Gastrocnemius medialis (tissue), 4 donors: ENCODE measurements at regions of chr20 and their contacts with region 1.

Region 1: DNA sequence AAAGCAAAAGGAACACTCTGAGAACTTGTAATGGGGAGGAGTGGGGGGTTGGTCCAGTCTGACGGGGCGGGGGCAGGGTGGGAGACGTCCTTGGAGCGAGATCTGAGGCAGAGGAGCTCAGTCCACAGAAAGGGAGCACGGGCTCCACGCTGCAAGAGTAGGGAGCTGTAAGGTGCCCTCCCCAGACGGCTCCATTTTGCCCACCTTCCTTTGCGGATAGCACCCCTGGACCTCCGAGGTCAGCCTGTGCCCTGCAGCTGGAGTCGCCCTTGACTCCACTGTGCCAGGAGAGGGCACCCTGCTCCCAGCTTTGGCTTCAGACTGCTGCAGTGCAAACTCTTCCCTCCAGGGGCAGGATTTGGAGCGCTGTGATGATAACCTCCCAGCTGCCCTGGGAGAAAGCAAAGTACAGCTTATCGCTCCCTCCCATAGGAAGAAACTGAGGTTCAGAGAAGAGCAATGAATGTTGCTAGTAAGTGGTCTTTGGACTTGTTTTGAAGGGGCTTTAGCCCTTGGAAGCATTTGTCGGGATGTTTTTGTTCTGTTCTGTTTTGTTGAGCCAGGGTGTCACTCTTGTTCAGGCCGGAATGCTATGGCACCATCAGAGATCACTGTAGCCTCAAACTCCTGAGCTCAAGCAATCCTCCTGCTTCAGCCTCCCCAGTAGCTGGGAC is 9.5 kb upstream of the AHCY start:
- DNase-seq: peak; percentile 71 to 78
- ATAC-seq: peak; percentile 98 to 99
- H3K4me3 ChIP-seq: peak overlapping the region in 2 of 4 donors; percentile 15 to 22
- H3K27ac ChIP-seq: no peak overlapping the region
- H3K4me1 ChIP-seq: peaks cover 0 to 3% of the 10 kb centered on the region in 2 donors
- H3K27me3 ChIP-seq: peaks cover 4 to 10% (median 7%) of the 10 kb centered on the region in 3 donors
- CTCF ChIP-seq: peak; percentile 91 to 99 (median 98)
- POLR2A ChIP-seq: no peak

Region 2: DNA sequence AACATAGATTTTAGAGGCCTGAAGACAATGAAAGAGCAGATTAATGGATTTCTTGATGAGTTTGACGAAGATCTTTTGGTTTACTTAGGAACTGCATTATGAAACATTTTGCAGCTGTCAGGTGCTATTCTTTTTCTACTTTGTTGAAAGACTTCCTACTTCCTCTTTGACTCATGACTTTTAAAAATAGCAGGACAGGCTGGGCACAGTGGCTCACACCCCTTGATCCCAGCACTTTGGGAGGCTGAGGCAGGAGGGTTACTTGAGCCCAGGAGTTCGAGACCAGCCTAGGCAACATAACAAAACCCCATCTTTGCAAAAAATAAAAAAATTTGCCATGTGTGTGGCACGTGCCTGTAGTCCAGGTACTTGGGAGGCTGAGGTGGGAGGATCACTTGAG is 102.4 kb after region 1 on chr20:
- in situ Hi-C with region 1: no loop called
- intact Hi-C with region 1: no loop called
- DNase-seq: peak; percentile 23 to 34
- ATAC-seq: peak; percentile 90 to 96
- H3K4me3 ChIP-seq: no peak overlapping the region
- H3K27ac ChIP-seq: peak overlapping the region; percentile 55 to 72 (median 67)
- H3K4me1 ChIP-seq: peaks cover 12 to 14% of the 10 kb centered on the region in 2 donors
- H3K27me3 ChIP-seq: no peaks in the 10 kb centered on the region
- CTCF ChIP-seq: no peak
- POLR2A ChIP-seq: no peak

Region 3: GRCh38 chr20:34475979-34476736 is 163.5 kb after region 1 on chr20:
- in situ Hi-C with region 1: no loop called
- intact Hi-C with region 1: loop called (anchors 2 kb)
- DNase-seq: peak in 1 of 2 donors; percentile 27
- ATAC-seq: peak; percentile 54 to 78
- H3K4me3 ChIP-seq: no peak overlapping the region
- H3K27ac ChIP-seq: peak overlapping the region in 1 of 4 donors; percentile 29
- H3K4me1 ChIP-seq: peaks cover 13% of the 10 kb centered on the region in 2 donors
- H3K27me3 ChIP-seq: no peaks in the 10 kb centered on the region
- CTCF ChIP-seq: peak; percentile 38 to 75 (median 53)
- POLR2A ChIP-seq: no peak

Region 4: GRCh38 chr20:34516247-34517113 is 203.8 kb after region 1 on chr20 and contains the start of gene DYNLRB1:
- in situ Hi-C with region 1: loop called (anchors 5 to 10 kb)
- intact Hi-C with region 1: no loop called
- DNase-seq: peak; percentile 94 to 96
- ATAC-seq: peak; percentile 97 to 98
- H3K4me3 ChIP-seq: peak within 1 kb of the TSS; percentile 71 to 92 (median 78)
- H3K27ac ChIP-seq: peak within 1 kb of the TSS; percentile 88 to 96 (median 94)
- H3K4me1 ChIP-seq: peaks cover 39 to 41% of the 10 kb centered on the region in 2 donors
- H3K27me3 ChIP-seq: no peaks in the 10 kb centered on the region
- CTCF ChIP-seq: no peak
- POLR2A ChIP-seq: peak; percentile 78 to 85
- total RNA-seq, gene DYNLRB1: 115 to 216 (median 142) TPM

Region 5: DNA sequence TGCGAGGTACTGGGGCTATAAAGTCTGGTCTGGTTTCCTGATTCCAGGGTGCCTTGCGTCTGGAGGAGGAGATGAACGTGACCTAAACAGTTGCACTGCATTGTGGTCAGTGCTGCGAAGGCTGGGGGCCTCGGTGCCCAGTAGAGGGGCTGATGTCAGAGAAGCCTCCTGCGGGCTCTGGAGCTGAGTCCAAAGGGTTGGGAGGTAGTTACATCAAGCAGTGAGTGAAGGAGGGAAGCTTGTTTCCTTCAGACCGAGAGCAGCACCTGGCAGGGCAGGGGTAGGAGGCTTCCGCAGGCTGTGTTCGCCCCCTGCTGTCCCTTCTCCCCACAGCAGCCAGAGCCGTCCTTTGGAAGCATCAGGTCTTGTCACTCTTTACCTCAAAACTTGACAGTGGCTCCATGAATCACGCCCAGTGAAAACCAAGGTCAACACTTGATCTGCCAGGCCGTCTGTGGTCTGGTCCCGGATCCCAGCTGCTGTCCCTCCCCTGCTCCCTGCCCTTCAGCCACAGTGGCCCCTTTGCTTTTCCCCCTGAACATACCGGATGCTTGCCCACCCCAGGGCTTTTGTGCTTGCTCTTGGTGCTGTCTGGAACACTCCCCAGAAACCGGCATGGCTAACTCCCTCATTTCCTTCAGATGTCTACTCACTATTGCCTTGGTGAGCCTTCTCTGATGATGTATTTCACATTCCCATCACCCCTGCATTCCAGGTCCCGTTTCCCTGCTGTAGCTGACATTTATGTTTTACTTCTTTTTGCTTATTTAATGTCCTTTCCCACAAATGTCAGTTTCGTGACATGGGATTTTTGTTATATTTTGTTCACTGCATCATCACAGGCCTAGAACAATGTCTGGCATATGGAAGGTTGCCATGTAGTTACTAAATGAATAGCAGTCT is 210.5 kb after region 1 on chr20:
- in situ Hi-C with region 1: loop called (anchors 5 to 10 kb)
- intact Hi-C with region 1: loop called (anchors 1 kb)
- DNase-seq: peak; percentile 56 to 82
- ATAC-seq: peak; percentile 63 to 77
- H3K4me3 ChIP-seq: no peak overlapping the region
- H3K27ac ChIP-seq: peak overlapping the region; percentile 78 to 87 (median 79)
- H3K4me1 ChIP-seq: peaks cover 65 to 82% of the 10 kb centered on the region in 2 donors
- H3K27me3 ChIP-seq: no peaks in the 10 kb centered on the region
- CTCF ChIP-seq: peak; percentile 69 to 81 (median 70)
- POLR2A ChIP-seq: no peak

Region 6: GRCh38 chr20:34768096-34768495 is 455.4 kb after region 1 on chr20:
- in situ Hi-C with region 1: loop called in 3 of 4 experiments (anchors 5 to 25 kb)
- intact Hi-C with region 1: loop called (anchors 10 kb)
- DNase-seq: no peak
- ATAC-seq: no peak
- H3K4me3 ChIP-seq: no peak overlapping the region
- H3K27ac ChIP-seq: no peak overlapping the region
- H3K4me1 ChIP-seq: peaks cover 8 to 9% of the 10 kb centered on the region in 2 donors
- H3K27me3 ChIP-seq: no peaks in the 10 kb centered on the region
- CTCF ChIP-seq: no peak
- POLR2A ChIP-seq: no peak